MCF 10A (cell line): ENCODE measurements at regions of chr17 and their contacts with region 1.

Region 1: GRCh38 chr17:74176546-74177001 is 26.9 kb upstream of the RPL38 start:
- DNase-seq: peak; percentile 67
- H3K4me3 Mint-ChIP-seq: no peak overlapping the region
- H3K27ac Mint-ChIP-seq: no peak overlapping the region
- H3K4me1 Mint-ChIP-seq: peaks cover 6% of the 10 kb centered on the region
- H3K27me3 Mint-ChIP-seq: peaks cover 64% of the 10 kb centered on the region
- CTCF ChIP-seq: peak; percentile 89

Region 2: DNA sequence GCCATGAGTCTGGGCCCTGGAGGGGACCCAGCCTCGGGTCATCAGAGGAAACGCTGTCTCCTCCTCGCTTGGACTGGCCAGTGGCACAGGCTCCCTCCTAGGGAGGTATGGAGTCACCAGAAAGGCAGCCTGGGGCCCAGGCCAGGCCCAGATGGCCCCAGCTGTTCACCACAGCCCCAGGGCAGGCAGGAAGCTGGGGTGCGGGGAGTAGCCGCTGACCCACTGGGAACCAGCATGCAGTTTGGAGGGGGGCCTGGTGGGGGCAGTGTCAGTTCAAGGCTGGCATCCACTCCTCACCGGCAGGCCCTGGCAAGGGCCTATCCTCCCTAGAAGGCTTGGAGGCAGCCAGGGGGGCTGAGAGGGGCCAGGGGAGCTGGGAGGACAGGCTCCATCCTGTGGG is 581.1 kb before region 1 on chr17:
- CTCF ChIA-PET with region 1: no interaction called
- POLR2A ChIA-PET with region 1: no interaction called
- intact Hi-C with region 1: loop called (anchors 1 kb)
- DNase-seq: peak; percentile 24
- H3K4me3 Mint-ChIP-seq: no peak overlapping the region
- H3K27ac Mint-ChIP-seq: no peak overlapping the region
- H3K4me1 Mint-ChIP-seq: peaks cover 5% of the 10 kb centered on the region
- H3K27me3 Mint-ChIP-seq: no peaks in the 10 kb centered on the region
- CTCF ChIP-seq: peak; percentile 35

Region 3: DNA sequence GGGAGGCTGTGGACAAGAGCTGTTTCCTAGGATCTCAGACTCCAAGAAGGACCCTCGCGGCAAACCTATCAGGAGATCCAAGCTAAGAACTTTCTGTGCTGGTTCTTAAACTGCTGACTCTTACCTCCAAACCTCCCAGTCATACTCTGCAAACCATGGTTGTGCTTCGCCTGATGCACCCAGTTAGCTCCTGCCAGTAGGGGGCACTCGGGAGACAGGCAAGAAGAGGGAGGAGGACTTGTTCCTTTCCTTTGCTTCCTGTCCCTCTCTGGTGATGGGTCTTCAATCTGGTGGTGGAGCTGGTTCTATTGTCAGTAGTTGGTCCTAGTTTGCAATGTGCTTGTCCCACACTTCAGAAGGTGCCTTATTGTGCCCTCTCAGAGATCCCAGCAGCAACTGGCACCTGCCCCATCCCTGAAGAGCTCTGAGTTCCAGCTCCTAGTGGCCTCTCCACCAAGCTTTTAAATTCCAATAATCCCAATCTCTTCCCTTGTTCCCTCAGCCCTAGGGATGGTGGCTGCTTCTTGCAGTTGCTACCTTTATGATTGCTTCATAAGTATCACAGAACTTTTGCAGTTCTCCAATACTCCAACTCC is 86.6 kb before region 1 on chr17:
- CTCF ChIA-PET with region 1: interaction called, 5 read pairs
- POLR2A ChIA-PET with region 1: no interaction called
- intact Hi-C with region 1: loop called (anchors 1 kb)
- DNase-seq: peak; percentile 66
- H3K4me3 Mint-ChIP-seq: no peak overlapping the region
- H3K27ac Mint-ChIP-seq: no peak overlapping the region
- H3K4me1 Mint-ChIP-seq: no peaks in the 10 kb centered on the region
- H3K27me3 Mint-ChIP-seq: peaks cover 46% of the 10 kb centered on the region
- CTCF ChIP-seq: peak; percentile 46

Region 4: DNA sequence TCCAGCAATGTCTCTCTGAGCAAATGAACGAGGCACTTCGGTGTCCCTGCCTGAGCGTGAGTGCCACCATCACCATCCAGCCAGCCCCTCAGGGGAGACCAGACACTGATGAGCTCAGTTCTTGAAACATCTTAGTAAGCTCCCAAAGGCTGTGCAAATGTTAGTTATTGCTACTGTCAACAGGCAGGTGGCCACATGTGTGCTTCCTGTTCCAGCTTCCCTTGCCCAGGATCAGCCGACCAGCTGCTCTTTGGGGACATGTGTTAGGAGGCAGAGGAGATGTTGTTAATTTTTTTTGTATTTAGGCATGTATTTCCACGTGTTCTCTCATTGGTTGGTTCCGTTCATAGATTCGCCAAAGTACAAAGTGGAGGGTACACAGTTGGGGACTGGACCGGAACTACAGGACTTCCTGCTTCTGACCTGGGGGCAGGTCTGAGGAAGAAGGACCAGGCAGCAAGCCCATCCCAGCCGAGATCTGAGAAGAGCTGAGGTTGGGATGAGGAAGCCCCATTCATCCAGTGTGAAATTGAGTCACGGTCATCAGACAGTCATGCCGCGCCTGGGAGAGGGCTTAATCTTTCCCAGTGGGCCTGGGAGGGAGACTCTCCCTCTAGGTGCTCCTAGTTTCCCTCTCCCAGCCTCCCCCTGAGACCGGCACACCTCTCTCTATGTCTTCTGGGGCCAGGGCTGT is 40.6 kb after region 1 on chr17:
- CTCF ChIA-PET with region 1: no interaction called
- POLR2A ChIA-PET with region 1: no interaction called
- intact Hi-C with region 1: no loop called
- DNase-seq: no peak
- H3K4me3 Mint-ChIP-seq: no peak overlapping the region
- H3K27ac Mint-ChIP-seq: no peak overlapping the region
- H3K4me1 Mint-ChIP-seq: peaks cover 8% of the 10 kb centered on the region
- H3K27me3 Mint-ChIP-seq: no peaks in the 10 kb centered on the region
- CTCF ChIP-seq: no peak